Activated naive CD8-positive, alpha-beta T cell treated with anti-CD3 and anti-CD28 coated beads, Interleukin-2, amount 10 ng/mL, durations not matched to agents 7 days and 5 days (primary cell): ENCODE measurements at regions of chr6 and their contacts with region 1.

Region 1: GRCh38 chr6:2988426-2989331 is 11.0 kb upstream of the NQO2 start:
- DNase-seq: peak; percentile 87
- ATAC-seq: peak; percentile 74
- H3K4me3 Mint-ChIP-seq: peak overlapping the region; percentile 87
- H3K27ac Mint-ChIP-seq: peak overlapping the region; percentile 94
- H3K4me1 Mint-ChIP-seq: peaks cover 20% of the 10 kb centered on the region
- H3K27me3 Mint-ChIP-seq: no peaks in the 10 kb centered on the region

Region 2: GRCh38 chr6:2841264-2842138 is 147.2 kb before region 1 on chr6 and contains the start of gene SERPINB1:
- POLR2A ChIA-PET with region 1: interaction called, 34 read pairs
- DNase-seq: peak; percentile 85
- ATAC-seq: peak; percentile 88
- H3K4me3 Mint-ChIP-seq: peak within 1 kb of the TSS; percentile 83
- H3K27ac Mint-ChIP-seq: peak within 1 kb of the TSS; percentile 87
- H3K4me1 Mint-ChIP-seq: peaks cover 38% of the 10 kb centered on the region
- H3K27me3 Mint-ChIP-seq: no peaks in the 10 kb centered on the region
- total RNA-seq, gene SERPINB1: 58.6 to 59.8 TPM

Region 3: GRCh38 chr6:2940010-2940850 is 48.4 kb before region 1 on chr6:
- POLR2A ChIA-PET with region 1: interaction called, 98 read pairs
- DNase-seq: peak; percentile 72
- ATAC-seq: peak; percentile 82
- H3K4me3 Mint-ChIP-seq: peak overlapping the region; percentile 84
- H3K27ac Mint-ChIP-seq: peak overlapping the region; percentile 96
- H3K4me1 Mint-ChIP-seq: peaks cover 44% of the 10 kb centered on the region
- H3K27me3 Mint-ChIP-seq: no peaks in the 10 kb centered on the region

Region 4: GRCh38 chr6:2962016-2962415 is 26.7 kb before region 1 on chr6:
- POLR2A ChIA-PET with region 1: no interaction called
- DNase-seq: no peak
- ATAC-seq: no peak
- H3K4me3 Mint-ChIP-seq: no peak overlapping the region
- H3K27ac Mint-ChIP-seq: no peak overlapping the region
- H3K4me1 Mint-ChIP-seq: peaks cover 11% of the 10 kb centered on the region
- H3K27me3 Mint-ChIP-seq: no peaks in the 10 kb centered on the region

Region 5: GRCh38 chr6:2999618-3000557 is 11.2 kb after region 1 on chr6 and contains the start of gene NQO2:
- POLR2A ChIA-PET with region 1: interaction called, 21 read pairs
- DNase-seq: peak; percentile 96
- ATAC-seq: peak; percentile 83
- H3K4me3 Mint-ChIP-seq: peak within 1 kb of the TSS; percentile 97
- H3K27ac Mint-ChIP-seq: peak within 1 kb of the TSS; percentile 86
- H3K4me1 Mint-ChIP-seq: peaks cover 23% of the 10 kb centered on the region
- H3K27me3 Mint-ChIP-seq: peaks cover 2% of the 10 kb centered on the region
- total RNA-seq, gene NQO2: 17.0 to 17.5 TPM

Region 6: GRCh38 chr6:3013901-3014674 is 25.4 kb after region 1 on chr6:
- POLR2A ChIA-PET with region 1: no interaction called
- DNase-seq: no peak
- ATAC-seq: no peak
- H3K4me3 Mint-ChIP-seq: no peak overlapping the region
- H3K27ac Mint-ChIP-seq: no peak overlapping the region
- H3K4me1 Mint-ChIP-seq: peaks cover 8% of the 10 kb centered on the region
- H3K27me3 Mint-ChIP-seq: no peaks in the 10 kb centered on the region

Region 7: DNA sequence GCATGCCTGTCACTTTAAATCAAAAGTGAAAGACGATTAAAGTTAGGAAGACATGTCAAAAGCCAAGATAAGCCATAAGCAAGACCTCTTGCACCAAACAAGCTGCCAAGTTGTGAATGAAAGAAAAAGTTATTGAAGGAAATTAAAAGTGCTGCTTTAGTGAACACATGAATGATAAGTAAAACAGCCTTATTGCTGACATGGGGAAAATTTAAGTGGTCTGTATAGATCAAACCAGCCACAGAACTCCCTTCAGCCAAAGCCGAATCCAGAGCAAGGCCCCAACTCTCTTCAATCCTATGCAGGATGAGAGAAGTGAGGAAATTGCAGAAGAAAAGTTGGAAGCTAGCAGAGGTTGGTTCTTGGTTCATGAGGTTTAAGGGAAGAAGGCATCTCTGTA is 70.3 kb after region 1 on chr6:
- POLR2A ChIA-PET with region 1: interaction called, 37 read pairs
- DNase-seq: no peak
- ATAC-seq: no peak
- H3K4me3 Mint-ChIP-seq: peak overlapping the region; percentile 33
- H3K27ac Mint-ChIP-seq: peak overlapping the region; percentile 61
- H3K4me1 Mint-ChIP-seq: peaks cover 28% of the 10 kb centered on the region
- H3K27me3 Mint-ChIP-seq: peaks cover 2% of the 10 kb centered on the region

Region 8: DNA sequence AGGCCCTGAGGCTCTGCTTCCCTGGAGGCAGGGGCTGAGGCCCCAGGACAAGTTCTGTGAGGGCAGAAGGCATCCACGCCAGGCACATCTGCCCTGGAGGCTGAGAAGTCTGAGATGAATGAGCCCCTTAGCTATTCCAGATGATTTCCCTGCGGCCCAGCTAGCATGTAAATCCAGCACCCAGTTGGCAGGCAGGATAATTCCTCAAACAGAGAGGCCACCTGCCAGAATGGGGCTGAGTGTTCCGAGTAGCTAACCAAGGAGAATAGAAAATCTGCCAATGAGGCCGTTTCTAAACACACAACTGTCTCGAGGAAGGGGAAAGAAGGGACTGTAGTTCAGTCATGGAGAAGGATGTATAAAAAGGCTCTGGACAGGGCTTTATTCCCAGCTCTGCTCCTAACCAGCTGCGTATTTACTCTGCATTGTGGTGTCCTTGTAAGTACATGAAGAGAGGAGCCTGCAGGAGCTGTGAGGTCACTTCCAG is 1576.1 kb after region 1 on chr6:
- POLR2A ChIA-PET with region 1: no interaction called
- DNase-seq: no peak
- ATAC-seq: no peak
- H3K4me3 Mint-ChIP-seq: no peak overlapping the region
- H3K27ac Mint-ChIP-seq: no peak overlapping the region
- H3K4me1 Mint-ChIP-seq: no peaks in the 10 kb centered on the region
- H3K27me3 Mint-ChIP-seq: peaks cover 2% of the 10 kb centered on the region